AG04449 (cell line): ENCODE measurements at regions of chr2 and their contacts with region 1.

Region 1: GRCh38 chr2:180125245-180125962 is 118.3 kb upstream of the CWC22 start:
- DNase-seq: peak; percentile 82
- H3K4me3 ChIP-seq: no peak overlapping the region
- CTCF ChIP-seq: peak; percentile 57

Region 2: GRCh38 chr2:181058378-181059269 is 933.2 kb after region 1 on chr2:
- CTCF ChIA-PET with region 1: interaction called, 25 read pairs
- POLR2A ChIA-PET with region 1: no interaction called
- DNase-seq: no peak
- H3K4me3 ChIP-seq: no peak overlapping the region
- CTCF ChIP-seq: peak; percentile 22

Region 3: GRCh38 chr2:181104512-181105115 is 979.2 kb after region 1 on chr2:
- CTCF ChIA-PET with region 1: interaction called, 10 read pairs
- POLR2A ChIA-PET with region 1: no interaction called
- DNase-seq: peak; percentile 37
- H3K4me3 ChIP-seq: no peak overlapping the region
- CTCF ChIP-seq: peak; percentile 58

Region 4: DNA sequence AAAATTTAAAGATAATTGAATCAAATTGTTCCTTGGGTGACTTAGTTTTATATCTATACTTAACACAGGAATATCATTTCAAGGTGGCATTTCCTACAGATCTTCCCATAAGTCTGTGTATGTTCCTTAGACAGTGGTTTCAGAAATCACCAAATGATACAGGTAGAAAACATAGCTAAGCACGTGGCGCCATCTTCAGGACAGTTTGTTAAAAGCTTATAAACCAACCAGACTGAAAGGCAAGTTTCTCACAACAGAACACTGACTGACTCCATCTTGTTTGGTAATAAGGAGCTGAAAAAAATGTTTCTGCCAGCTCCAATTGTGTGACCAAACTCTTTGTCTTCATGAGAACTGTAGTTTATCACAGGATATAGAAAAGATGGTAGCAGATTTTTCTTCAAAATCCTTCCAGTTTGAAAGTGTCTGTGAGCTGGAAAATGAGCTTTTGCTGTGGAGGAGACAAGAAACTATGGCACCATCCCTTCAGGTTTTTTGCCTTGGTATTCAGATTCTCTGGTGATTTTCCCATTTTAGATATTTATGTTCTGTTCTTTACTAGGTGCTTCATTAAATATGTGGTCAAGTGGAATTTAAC is 1589.7 kb after region 1 on chr2:
- CTCF ChIA-PET with region 1: interaction called, 94 read pairs
- POLR2A ChIA-PET with region 1: no interaction called
- DNase-seq: peak; percentile 41
- H3K4me3 ChIP-seq: no peak overlapping the region
- CTCF ChIP-seq: peak; percentile 60